Ascending aorta (tissue), 2 donors: ENCODE measurements at regions of chr4 and their contacts with region 1.

Region 1: GRCh38 chr4:105146276-105147015 is at the start of gene TET2:
- DNase-seq: peak; percentile 46 to 91
- H3K4me3 ChIP-seq: peak within 1 kb of the TSS; percentile 89 to 91
- H3K27ac ChIP-seq: peak within 1 kb of the TSS; percentile 86 to 88
- H3K4me1 ChIP-seq: peaks cover 0 to 2% of the 10 kb centered on the region in 2 donors
- H3K27me3 ChIP-seq: no peaks in the 10 kb centered on the region
- CTCF ChIP-seq: peak in 1 of 3 experiments; percentile 14
- total RNA-seq, gene TET2: 14.8 TPM

Region 2: GRCh38 chr4:105191621-105192210 is 45.3 kb after region 1 on chr4:
- intact Hi-C with region 1: loop called (anchors 2 kb)
- DNase-seq: no peak
- H3K4me3 ChIP-seq: peak overlapping the region in 1 of 2 donors; percentile 4
- H3K27ac ChIP-seq: peak overlapping the region; percentile 60 to 68
- H3K4me1 ChIP-seq: peaks cover 2 to 9% of the 10 kb centered on the region in 2 donors
- H3K27me3 ChIP-seq: no peaks in the 10 kb centered on the region
- CTCF ChIP-seq: no peak

Region 3: DNA sequence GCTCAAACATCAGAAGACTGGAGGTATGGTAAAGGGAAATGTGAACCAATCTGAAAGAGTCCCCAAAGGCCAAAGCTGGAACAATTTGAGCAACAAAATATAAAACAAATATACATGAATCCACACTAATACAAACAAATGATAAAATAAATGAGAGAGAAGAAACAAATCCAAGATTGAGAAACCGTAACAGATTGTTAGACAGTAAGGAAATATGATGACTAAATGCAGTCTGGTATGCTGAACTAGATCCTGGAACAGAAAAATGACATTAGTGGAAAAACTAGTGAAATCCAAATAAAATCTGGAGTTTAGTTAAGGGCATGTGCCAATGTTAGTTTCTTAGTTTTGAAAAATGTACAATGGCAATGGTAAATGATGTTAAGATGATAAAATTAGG is 311.6 kb after region 1 on chr4:
- intact Hi-C with region 1: loop called (anchors 5 kb)
- DNase-seq: no peak
- H3K4me3 ChIP-seq: no peak overlapping the region
- H3K27ac ChIP-seq: peak overlapping the region; percentile 19 to 48
- H3K4me1 ChIP-seq: peaks cover 0 to 12% of the 10 kb centered on the region in 2 donors
- H3K27me3 ChIP-seq: no peaks in the 10 kb centered on the region
- CTCF ChIP-seq: no peak

Region 4: GRCh38 chr4:105708530-105709391 is 562.3 kb after region 1 on chr4 and contains the starts of genes GSTCD and INTS12:
- intact Hi-C with region 1: loop called (anchors 5 kb)
- DNase-seq: peak; percentile 61 to 95
- H3K4me3 ChIP-seq: peak within 1 kb of the TSS; percentile 76 to 87
- H3K27ac ChIP-seq: peak within 1 kb of the TSS; percentile 84 to 90
- H3K4me1 ChIP-seq: peaks cover 7 to 18% of the 10 kb centered on the region in 2 donors
- H3K27me3 ChIP-seq: no peaks in the 10 kb centered on the region
- CTCF ChIP-seq: no peak
- total RNA-seq, gene GSTCD: 4.4 TPM
- total RNA-seq, gene INTS12: 11.5 TPM

Region 5: DNA sequence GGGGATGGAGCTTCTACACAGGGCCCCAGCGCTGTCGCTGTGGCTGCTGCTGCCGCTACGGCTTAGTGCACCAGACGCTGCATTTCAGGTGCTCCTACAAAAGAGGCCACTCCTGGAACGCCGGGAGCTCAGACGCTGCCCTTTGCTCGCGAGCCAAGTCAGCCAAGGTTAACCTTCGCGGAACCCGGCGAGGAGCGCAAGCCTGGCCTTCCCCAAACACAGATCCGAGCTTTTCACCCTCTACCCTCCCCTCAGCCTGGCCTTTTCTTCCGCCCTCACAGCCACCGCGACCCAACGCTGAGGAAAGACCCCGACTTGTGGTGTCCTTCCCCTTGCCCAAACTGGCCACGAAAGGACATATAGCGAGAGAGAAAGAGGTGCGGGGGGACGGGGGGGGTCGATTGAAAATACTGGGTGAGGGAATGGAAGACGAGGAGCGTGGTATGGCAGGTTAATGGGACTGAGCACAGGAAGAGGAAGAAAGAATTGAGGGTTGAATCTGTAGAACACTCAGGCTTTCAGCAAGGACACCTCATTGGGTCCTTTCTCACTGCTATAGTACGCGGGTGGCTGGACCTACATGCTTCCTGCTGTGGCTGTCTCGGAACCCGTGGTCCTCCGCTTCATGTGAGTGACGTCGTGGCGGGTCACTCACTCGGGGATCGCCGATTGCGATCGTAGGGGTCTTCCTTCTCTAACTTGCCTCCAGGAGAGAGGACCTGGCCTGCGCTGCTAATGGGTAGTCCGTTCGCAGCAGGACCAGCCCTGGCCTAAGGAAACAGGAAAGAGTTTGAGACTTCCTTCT is 1169.7 kb after region 1 on chr4 and contains the starts of genes AIMP1 and TBCK:
- intact Hi-C with region 1: loop called (anchors 10 kb)
- DNase-seq: peak; percentile 70 to 94
- H3K4me3 ChIP-seq: peak within 1 kb of the TSS; percentile 70 to 87
- H3K27ac ChIP-seq: peak within 1 kb of the TSS; percentile 89 to 97
- H3K4me1 ChIP-seq: peaks cover 3 to 32% of the 10 kb centered on the region in 2 donors
- H3K27me3 ChIP-seq: no peaks in the 10 kb centered on the region
- CTCF ChIP-seq: no peak
- total RNA-seq, gene AIMP1: 14.9 TPM
- total RNA-seq, gene TBCK: 35.7 TPM